ENCODE measurements at regions of chr20 and their contacts with region 1.

Region 1: GRCh38 chr20:50744143-50744792 is 12.9 kb downstream of the PARD6B start:
- DNase-seq: no peak
- ATAC-seq: peak; percentile 69
- H3K4me3 ChIP-seq: peak overlapping the region in 1 of 2 experiments; percentile 25; a peak in 2 of 4 replicates
- H3K27ac ChIP-seq: peak overlapping the region; percentile 99
- H3K4me1 ChIP-seq: peaks cover 86% of the 10 kb centered on the region
- H3K27me3 ChIP-seq: no peaks in the 10 kb centered on the region
- CTCF ChIP-seq: no peak; the same call in 1 of the 2 replicates

Region 2: GRCh38 chr20:50144362-50144761 is 599.9 kb before region 1 on chr20:
- CTCF ChIA-PET with region 1: no interaction called
- POLR2A ChIA-PET with region 1: no interaction called
- in situ Hi-C with region 1: no loop called
- intact Hi-C with region 1: no loop called
- DNase-seq: no peak
- ATAC-seq: peak; percentile 8; the same call in 1 of the 2 replicates
- H3K4me3 ChIP-seq: no peak overlapping the region
- H3K27ac ChIP-seq: peak overlapping the region; percentile 76
- H3K4me1 ChIP-seq: peaks cover 85% of the 10 kb centered on the region
- H3K27me3 ChIP-seq: no peaks in the 10 kb centered on the region
- CTCF ChIP-seq: no peak

Region 3: GRCh38 chr20:50625986-50626677 is 118.1 kb before region 1 on chr20:
- CTCF ChIA-PET with region 1: interaction called, 4 read pairs
- POLR2A ChIA-PET with region 1: interaction called, 10 read pairs
- in situ Hi-C with region 1: no loop called
- intact Hi-C with region 1: no loop called
- DNase-seq: no peak
- ATAC-seq: peak; percentile 58
- H3K4me3 ChIP-seq: no peak overlapping the region
- H3K27ac ChIP-seq: peak overlapping the region; percentile 86
- H3K4me1 ChIP-seq: peaks cover 51% of the 10 kb centered on the region
- H3K27me3 ChIP-seq: no peaks in the 10 kb centered on the region
- CTCF ChIP-seq: peak; percentile 91

Region 4: GRCh38 chr20:50635667-50636503 is 108.4 kb before region 1 on chr20:
- CTCF ChIA-PET with region 1: interaction called, 12 read pairs
- POLR2A ChIA-PET with region 1: no interaction called
- in situ Hi-C with region 1: no loop called
- intact Hi-C with region 1: no loop called
- DNase-seq: peak; percentile 59
- ATAC-seq: peak; percentile 60
- H3K4me3 ChIP-seq: peak overlapping the region; percentile 18 to 36
- H3K27ac ChIP-seq: peak overlapping the region; percentile 95
- H3K4me1 ChIP-seq: peaks cover 92% of the 10 kb centered on the region
- H3K27me3 ChIP-seq: no peaks in the 10 kb centered on the region
- CTCF ChIP-seq: peak; percentile 99

Region 5: GRCh38 chr20:50762435-50763201 is 18.4 kb after region 1 on chr20:
- CTCF ChIA-PET with region 1: no interaction called
- POLR2A ChIA-PET with region 1: interaction called, 11 read pairs
- in situ Hi-C with region 1: no loop called
- intact Hi-C with region 1: no loop called
- DNase-seq: peak; percentile 79
- ATAC-seq: peak; percentile 52
- H3K4me3 ChIP-seq: peak overlapping the region in 1 of 2 experiments; percentile 2; a peak in 1 of 4 replicates
- H3K27ac ChIP-seq: peak overlapping the region; percentile 99
- H3K4me1 ChIP-seq: peaks cover 76% of the 10 kb centered on the region
- H3K27me3 ChIP-seq: no peaks in the 10 kb centered on the region
- CTCF ChIP-seq: no peak

Region 6: DNA sequence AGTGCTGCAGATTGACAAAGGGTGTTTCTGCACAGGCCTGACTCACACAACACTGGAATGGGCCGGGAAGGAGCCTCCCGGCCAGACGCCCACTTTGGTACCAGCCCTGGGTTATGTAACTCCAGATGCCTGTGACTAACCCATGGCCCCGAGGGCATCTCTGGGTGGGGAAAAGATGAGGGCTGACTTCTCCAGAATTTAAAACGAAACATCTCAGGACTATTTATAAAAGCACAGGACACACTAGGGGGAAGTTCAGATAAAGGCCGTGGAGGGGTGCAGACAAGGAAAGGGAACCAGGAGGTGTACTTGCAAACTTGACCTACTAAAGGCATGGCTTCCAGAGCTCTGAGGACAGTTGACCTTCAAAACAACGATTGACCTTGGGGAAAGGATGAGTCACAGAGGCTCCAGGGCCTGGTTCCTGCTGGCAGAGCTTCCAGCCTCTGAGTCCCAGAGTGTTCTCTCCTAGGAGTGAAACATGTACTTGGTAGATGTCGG is 601.4 kb after region 1 on chr20:
- CTCF ChIA-PET with region 1: no interaction called
- POLR2A ChIA-PET with region 1: no interaction called
- in situ Hi-C with region 1: no loop called
- intact Hi-C with region 1: no loop called
- DNase-seq: no peak
- ATAC-seq: no peak
- H3K4me3 ChIP-seq: no peak overlapping the region
- H3K27ac ChIP-seq: no peak overlapping the region
- H3K4me1 ChIP-seq: no peaks in the 10 kb centered on the region
- H3K27me3 ChIP-seq: 0 out of 2 replicates have a peak, but pooled peaks cover 1% of the 10 kb centered on the region
- CTCF ChIP-seq: no peak